ENCODE measurements at regions of chr11 and their contacts with region 1.

Region 1: GRCh38 chr11:77198440-77198849 is 70.4 kb downstream of the MYO7A start:
- DNase-seq: peak in 2 of 5 donors; percentile 18 to 34
- ATAC-seq: no peak
- H3K4me3 ChIP-seq: no peak overlapping the region
- H3K27ac ChIP-seq: no peak overlapping the region
- H3K4me1 ChIP-seq: peaks cover 0 to 9% (median 3%) of the 10 kb centered on the region in 12 donors
- H3K27me3 ChIP-seq: no peaks in the 10 kb centered on the region
- CTCF ChIP-seq: peak in 2 of 12 donors; percentile 12 to 24
- POLR2A ChIP-seq: no peak

Region 2: DNA sequence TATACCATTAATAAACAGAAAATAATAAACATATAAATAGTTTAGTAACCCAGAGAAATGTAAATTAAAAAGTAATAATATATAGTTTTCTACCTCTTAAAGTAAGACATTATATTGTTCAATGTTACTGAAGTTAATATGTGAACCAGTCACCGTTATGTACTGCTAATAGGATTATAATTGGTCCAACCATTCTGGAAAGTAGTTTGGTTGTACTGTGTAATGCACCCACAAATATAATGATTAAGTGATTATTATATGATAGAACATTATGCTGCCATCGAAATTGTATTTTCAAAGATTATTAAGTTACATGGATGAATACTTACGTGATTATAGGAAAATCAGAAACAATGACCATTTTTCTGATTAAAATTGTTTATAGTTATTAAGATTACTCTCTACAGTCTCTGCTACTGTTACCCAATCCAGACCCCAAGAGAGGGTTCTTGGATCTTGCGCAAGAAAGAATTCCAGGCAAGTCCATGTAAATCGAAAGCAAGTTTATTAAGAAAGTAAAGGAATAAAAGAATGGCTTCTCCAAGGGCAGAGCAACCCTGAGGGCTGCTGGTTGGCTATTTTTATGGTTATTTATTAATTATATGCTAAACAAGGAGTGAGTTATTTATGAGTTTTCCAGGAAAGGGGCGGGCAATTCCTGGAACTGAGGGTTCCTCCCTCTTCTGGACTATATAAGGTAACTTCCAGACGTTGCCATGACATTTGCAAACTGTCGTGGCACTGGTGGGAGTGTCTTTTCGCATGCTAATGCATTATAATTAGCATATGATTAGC is 287.6 kb before region 1 on chr11:
- intact Hi-C with region 1: no loop called
- DNase-seq: peak in 4 of 5 donors; percentile 31 to 56 (median 48)
- ATAC-seq: peak in 3 of 4 donors; percentile 26 to 71 (median 64)
- H3K4me3 ChIP-seq: peak overlapping the region in 7 of 12 donors; percentile 4 to 46 (median 22)
- H3K27ac ChIP-seq: peak overlapping the region in 8 of 12 donors; percentile 2 to 66 (median 28)
- H3K4me1 ChIP-seq: peaks cover 0 to 17% (median 0%) of the 10 kb centered on the region in 12 donors
- H3K27me3 ChIP-seq: no peaks in the 10 kb centered on the region
- CTCF ChIP-seq: no peak
- POLR2A ChIP-seq: no peak

Region 3: DNA sequence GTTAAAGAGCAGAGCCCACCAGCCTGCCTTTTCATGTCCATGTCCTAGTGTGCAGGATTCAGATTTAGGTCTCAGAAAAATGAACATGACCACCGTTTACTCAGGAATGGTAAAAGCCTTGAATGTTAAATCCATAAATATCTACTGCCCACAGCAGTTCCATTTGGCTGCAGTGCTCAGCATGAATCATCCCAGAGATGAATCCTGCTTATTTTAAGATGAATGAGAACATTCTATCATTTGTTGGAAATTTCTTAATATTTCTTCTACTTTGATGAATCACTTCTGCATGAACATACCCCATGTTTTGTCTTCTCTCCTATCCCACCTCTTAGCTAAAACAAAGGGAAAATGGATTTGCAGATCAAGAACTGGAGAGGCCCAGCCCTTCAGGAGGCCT is 343.9 kb after region 1 on chr11:
- intact Hi-C with region 1: loop called in 6 of 10 experiments (anchors 5 kb)
- DNase-seq: no peak
- ATAC-seq: no peak
- H3K4me3 ChIP-seq: no peak overlapping the region
- H3K27ac ChIP-seq: no peak overlapping the region
- H3K4me1 ChIP-seq: no peaks in the 10 kb centered on the region
- H3K27me3 ChIP-seq: no peaks in the 10 kb centered on the region
- CTCF ChIP-seq: no peak
- POLR2A ChIP-seq: no peak

Region 4: DNA sequence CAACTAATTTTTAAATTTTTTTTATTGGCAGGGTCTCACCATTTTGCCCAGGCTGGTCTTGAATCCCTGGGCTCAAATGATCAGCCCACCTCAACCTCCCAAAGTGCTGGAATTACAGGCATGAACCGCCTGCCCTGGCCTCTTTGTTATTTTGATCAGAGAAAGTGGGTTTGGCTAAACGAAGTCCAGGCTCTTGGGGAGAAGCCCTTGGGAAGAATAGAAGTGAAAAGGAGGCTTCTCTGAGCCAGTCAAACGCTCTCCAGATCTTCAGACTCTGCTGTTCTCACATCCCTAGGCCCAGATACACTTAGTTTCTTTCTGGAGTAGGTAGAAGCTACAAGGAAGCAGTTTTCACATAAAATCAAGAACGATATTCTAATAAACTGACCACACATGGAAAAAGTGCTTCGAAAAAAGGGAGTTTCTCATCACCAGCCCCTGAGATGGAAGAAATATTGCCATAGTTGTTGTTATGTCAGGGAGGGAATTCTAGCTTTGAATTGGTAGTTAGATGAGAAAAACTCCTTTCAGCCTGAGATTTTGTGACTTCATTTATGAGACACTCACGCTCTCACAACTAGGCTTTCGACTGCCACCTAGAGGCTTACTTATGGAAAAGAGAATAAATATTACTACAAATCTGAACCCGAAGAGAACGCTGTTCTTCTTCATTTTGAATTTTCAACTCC is 349.6 kb after region 1 on chr11:
- intact Hi-C with region 1: loop called (anchors 1 to 5 kb)
- DNase-seq: peak in 2 of 5 donors; percentile 23 to 26
- ATAC-seq: peak in 3 of 4 donors; percentile 30 to 66 (median 39)
- H3K4me3 ChIP-seq: no peak overlapping the region
- H3K27ac ChIP-seq: no peak overlapping the region
- H3K4me1 ChIP-seq: peaks cover 0 to 9% (median 0%) of the 10 kb centered on the region in 12 donors
- H3K27me3 ChIP-seq: no peaks in the 10 kb centered on the region
- CTCF ChIP-seq: peak; percentile 42 to 75 (median 58)
- POLR2A ChIP-seq: no peak

Region 5: DNA sequence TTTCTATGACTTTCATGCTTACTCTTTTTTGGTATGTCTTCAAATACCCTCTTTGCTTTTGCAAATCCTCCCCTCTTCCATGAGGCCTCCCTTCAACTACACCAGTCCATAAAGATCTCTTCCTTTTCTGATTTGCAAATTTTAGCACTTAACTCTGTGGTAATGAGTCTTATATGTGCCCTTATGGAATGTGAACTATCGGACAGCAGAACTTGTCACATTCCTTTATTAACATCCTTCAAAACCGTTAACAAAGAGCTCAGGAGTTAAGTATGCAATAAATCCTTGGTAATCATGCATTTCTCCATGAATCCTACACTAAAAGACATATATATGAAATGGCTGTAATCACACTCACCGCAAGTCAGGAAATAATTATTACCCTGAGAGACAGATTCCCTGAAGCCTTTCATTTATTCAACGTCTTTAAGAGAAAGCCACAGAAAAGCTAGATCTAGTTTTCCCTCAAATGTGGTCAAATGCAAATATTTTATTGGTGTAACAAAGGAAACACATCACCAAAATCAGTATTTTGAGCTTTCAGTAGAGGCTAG is 431.8 kb after region 1 on chr11:
- intact Hi-C with region 1: no loop called
- DNase-seq: no peak
- ATAC-seq: no peak
- H3K4me3 ChIP-seq: no peak overlapping the region
- H3K27ac ChIP-seq: peak overlapping the region in 1 of 12 donors; percentile 19
- H3K4me1 ChIP-seq: peaks cover 0 to 37% (median 0%) of the 10 kb centered on the region in 12 donors
- H3K27me3 ChIP-seq: no peaks in the 10 kb centered on the region
- CTCF ChIP-seq: no peak
- POLR2A ChIP-seq: no peak